A549 (cell line): ENCODE measurements at regions of chr2 and their contacts with region 1.

Region 1: GRCh38 chr2:230987137-230988020 is 8.5 kb upstream of the SPATA3 start:
- DNase-seq: peak; percentile 75 to 88
- ATAC-seq: peak; percentile 93 to 98
- H3K4me3 ChIP-seq: peak overlapping the region; percentile 50
- H3K27ac ChIP-seq: peak overlapping the region; percentile 71 to 84
- H3K4me1 ChIP-seq: 0 out of 3 replicates have a peak, but pooled peaks cover 2% of the 10 kb centered on the region
- CTCF ChIP-seq: peak; percentile 92
- EP300 ChIP-seq: no peak
- POLR2A ChIP-seq: no peak
- RAD21 ChIP-seq: peak; percentile 92 to 95

Region 2: GRCh38 chr2:230824406-230824978 is 162.9 kb before region 1 on chr2:
- CTCF ChIA-PET with region 1: interaction called, 116 read pairs
- POLR2A ChIA-PET with region 1: interaction called, 6 read pairs
- DNase-seq: peak; percentile 46 to 81
- ATAC-seq: peak; percentile 83 to 96
- H3K4me3 ChIP-seq: no peak overlapping the region
- H3K27ac ChIP-seq: 0 out of 6 replicates have a peak overlapping the region, but pooled peaks of 1 of the 2 experiments have one; percentile 24
- H3K4me1 ChIP-seq: no peaks in the 10 kb centered on the region
- CTCF ChIP-seq: peak; percentile 80
- EP300 ChIP-seq: no peak
- POLR2A ChIP-seq: no peak
- RAD21 ChIP-seq: peak; percentile 84 to 90

Region 3: DNA sequence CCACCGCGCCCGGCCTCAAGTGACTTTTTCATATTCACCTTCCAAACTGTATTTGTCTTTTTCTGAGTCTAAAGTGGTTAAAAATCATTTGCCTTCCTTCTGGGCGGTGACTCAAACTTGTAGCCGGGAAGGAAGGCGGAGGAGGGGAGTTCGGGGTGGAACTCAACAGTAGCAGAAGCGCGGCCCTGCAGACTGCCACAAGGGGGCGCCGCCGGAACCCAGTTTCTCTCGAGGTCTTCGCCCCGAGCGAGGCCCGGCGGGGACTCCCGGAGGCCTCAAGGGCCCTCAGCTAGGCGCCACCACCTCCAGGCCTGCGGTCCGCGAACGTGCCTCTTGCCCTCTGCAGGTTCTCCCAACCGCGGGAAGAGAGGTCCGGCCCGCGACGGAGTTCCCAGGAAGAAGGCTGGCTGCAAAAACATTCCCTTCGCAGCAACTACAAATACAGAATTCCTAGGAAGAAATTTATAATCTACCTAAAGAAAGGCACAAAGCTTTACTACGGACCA is 139.4 kb before region 1 on chr2:
- CTCF ChIA-PET with region 1: interaction called, 17 read pairs
- POLR2A ChIA-PET with region 1: no interaction called
- DNase-seq: peak; percentile 76 to 83
- ATAC-seq: peak; percentile 94 to 96
- H3K4me3 ChIP-seq: no peak overlapping the region
- H3K27ac ChIP-seq: peak overlapping the region in 1 of 2 experiments; percentile 48; a peak in 1 of 6 replicates
- H3K4me1 ChIP-seq: no peaks in the 10 kb centered on the region; the same call in 2 of the 3 replicates
- CTCF ChIP-seq: peak; percentile 87
- EP300 ChIP-seq: no peak
- POLR2A ChIP-seq: no peak
- RAD21 ChIP-seq: peak; percentile 49 to 65

Region 4: DNA sequence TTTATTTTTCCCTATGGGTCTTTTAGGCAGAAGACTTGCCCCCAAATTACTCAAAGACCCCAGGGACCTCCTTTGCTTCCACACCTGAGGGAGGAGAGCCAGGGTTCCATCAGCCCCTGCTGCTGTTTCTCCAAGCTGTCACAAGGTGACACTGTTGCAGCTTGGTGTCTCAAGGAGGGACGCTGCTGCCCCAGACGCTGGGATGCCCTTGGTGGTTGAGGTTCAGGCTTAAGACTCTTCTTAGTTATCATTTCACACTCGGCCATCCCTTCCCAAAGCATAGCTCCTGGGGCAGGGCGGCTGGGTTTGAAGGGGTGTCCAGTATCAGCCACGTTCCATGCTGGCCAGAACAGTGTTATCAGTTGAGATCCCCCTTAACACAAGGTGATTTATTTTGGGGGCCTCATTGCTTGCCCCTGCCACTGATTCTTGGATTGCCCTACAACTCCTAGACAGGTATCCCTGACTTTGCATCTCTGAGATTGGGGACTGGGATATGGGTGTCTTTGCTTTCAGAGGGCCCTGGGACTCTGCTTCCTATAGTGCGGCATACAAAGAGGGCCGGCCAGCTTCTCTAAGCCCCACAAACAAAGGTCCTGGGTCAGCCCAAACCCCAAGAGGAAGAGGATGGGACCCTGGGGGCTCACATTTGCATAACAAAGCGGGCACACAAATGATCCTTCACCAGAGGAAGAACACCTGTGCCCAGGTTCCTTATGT is 85.0 kb before region 1 on chr2:
- CTCF ChIA-PET with region 1: interaction called, 64 read pairs
- POLR2A ChIA-PET with region 1: interaction called, 3 read pairs
- DNase-seq: peak; percentile 57 to 75
- ATAC-seq: peak; percentile 80 to 93; a peak in 5 of 6 replicates
- H3K4me3 ChIP-seq: no peak overlapping the region
- H3K27ac ChIP-seq: no peak overlapping the region
- H3K4me1 ChIP-seq: no peaks in the 10 kb centered on the region
- CTCF ChIP-seq: peak; percentile 74
- EP300 ChIP-seq: no peak
- POLR2A ChIP-seq: no peak
- RAD21 ChIP-seq: peak; percentile 86 to 91

Region 5: GRCh38 chr2:230942920-230943896 is 44.2 kb before region 1 on chr2:
- CTCF ChIA-PET with region 1: interaction called, 19 read pairs
- POLR2A ChIA-PET with region 1: no interaction called
- DNase-seq: no peak
- ATAC-seq: no peak
- H3K4me3 ChIP-seq: no peak overlapping the region
- H3K27ac ChIP-seq: no peak overlapping the region
- H3K4me1 ChIP-seq: no peaks in the 10 kb centered on the region
- CTCF ChIP-seq: no peak
- EP300 ChIP-seq: no peak
- POLR2A ChIP-seq: no peak
- RAD21 ChIP-seq: no peak

Region 6: DNA sequence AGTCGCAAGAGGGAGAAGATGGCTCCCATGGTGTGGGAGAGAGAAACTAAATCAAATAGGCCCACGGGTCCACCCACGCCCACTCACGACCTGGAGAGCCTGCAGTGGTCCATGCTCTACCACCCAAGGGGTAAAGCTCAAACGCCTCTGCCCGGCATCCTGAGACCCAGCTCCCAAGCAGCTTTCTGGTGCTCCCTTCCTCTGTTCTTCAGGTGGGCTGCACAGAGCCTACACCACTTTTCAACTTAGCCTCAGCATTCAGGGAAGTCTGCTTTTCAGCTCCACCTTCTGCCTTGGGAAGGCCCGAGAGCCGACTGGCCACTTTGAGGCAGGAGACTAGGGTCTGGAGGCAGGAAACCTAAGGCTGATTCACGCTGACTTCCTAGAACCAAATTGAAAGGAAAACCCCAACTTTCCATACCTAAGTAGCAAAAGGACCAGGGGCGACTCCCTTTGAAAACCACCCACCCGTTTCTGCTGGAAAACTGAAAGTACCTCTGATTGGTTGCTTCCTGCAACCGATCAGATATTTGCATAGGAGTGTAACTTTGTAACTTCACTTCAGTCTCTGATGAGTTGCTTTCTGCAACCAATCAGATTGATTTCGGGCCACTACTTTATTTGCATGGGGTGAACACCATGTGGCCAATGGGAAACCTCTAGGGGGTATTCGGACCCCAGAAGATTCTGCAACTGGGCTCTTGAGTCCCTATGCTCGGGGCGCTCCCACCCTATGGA is 18.3 kb before region 1 on chr2:
- CTCF ChIA-PET with region 1: interaction called, 20 read pairs
- POLR2A ChIA-PET with region 1: no interaction called
- DNase-seq: no peak
- ATAC-seq: no peak
- H3K4me3 ChIP-seq: no peak overlapping the region
- H3K27ac ChIP-seq: no peak overlapping the region
- H3K4me1 ChIP-seq: no peaks in the 10 kb centered on the region
- CTCF ChIP-seq: no peak
- EP300 ChIP-seq: no peak
- POLR2A ChIP-seq: no peak
- RAD21 ChIP-seq: no peak

Region 7: GRCh38 chr2:231000211-231000904 is 13.0 kb after region 1 on chr2:
- CTCF ChIA-PET with region 1: interaction called, 16 read pairs
- POLR2A ChIA-PET with region 1: interaction called, 5 read pairs
- DNase-seq: peak; percentile 48 to 49
- ATAC-seq: peak; percentile 83 to 90
- H3K4me3 ChIP-seq: no peak overlapping the region
- H3K27ac ChIP-seq: no peak overlapping the region
- H3K4me1 ChIP-seq: no peaks in the 10 kb centered on the region
- CTCF ChIP-seq: peak; percentile 30; the same call in 1 of the 3 replicates
- EP300 ChIP-seq: no peak
- POLR2A ChIP-seq: no peak
- RAD21 ChIP-seq: peak in 1 of 2 experiments; percentile 25; a peak in 1 of 5 replicates